Ascending aorta (tissue), 2 donors: ENCODE measurements at regions of chr2 and their contacts with region 1.

Region 1: DNA sequence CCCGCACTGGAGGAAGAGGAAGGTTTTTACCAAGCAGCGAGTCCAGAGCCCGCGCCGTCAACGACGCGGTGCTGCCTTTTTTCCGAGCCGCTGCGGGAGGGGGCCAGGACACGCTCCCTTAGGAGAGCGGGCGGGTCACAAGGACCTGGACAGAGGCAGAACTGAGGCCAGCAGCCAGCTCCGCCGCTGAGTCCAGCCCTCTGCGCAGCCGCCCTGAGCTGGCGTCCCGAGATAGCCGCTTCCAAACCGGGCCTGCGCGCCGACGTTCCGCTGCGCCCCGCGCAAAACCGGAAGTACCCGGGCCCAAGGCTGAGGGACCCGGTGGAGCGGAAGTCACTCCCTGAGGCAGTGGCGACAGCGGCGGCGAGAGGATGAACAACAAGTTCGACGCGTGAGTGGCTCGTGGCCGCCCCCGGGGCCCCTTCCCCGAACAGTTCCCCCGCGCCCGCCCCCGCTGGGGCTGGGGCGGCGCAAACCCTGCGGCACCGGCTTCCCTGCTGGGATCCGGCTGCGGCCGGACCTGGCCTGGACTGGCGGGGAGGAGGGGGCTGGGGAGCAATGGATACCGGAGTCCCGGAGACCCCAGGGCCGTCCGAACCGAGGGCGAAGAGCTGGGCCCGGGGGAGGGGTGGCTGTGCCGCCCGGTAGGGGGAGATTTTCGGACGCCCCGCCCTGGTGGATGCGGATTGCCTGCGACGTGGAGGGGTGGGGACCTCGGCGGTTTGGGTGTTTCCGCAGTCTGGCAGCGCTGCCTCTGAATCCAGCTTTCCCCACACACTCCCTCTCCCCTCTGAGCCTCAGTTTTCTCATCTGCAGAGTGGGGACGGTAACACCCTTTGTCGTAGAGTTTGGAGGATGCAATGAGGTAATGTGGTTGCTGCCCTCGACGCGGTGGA is at the starts of genes EIF4E2 and TIGD1:
- DNase-seq: peak; percentile 67 to 97
- H3K4me3 ChIP-seq: peak within 1 kb of the TSS; percentile 84 to 100
- H3K27ac ChIP-seq: peak within 1 kb of the TSS; percentile 97 to 100
- H3K4me1 ChIP-seq: peaks cover 4 to 5% of the 10 kb centered on the region in 2 donors
- H3K27me3 ChIP-seq: no peaks in the 10 kb centered on the region
- CTCF ChIP-seq: peak; percentile 31 to 45 (median 34)
- total RNA-seq, gene EIF4E2: 16.7 TPM
- total RNA-seq, gene TIGD1: 0.53 TPM

Region 2: GRCh38 chr2:232600053-232600773 is 49.6 kb after region 1 on chr2:
- intact Hi-C with region 1: loop called (anchors 5 kb)
- DNase-seq: no peak
- H3K4me3 ChIP-seq: no peak overlapping the region
- H3K27ac ChIP-seq: no peak overlapping the region
- H3K4me1 ChIP-seq: no peaks in the 10 kb centered on the region
- H3K27me3 ChIP-seq: no peaks in the 10 kb centered on the region
- CTCF ChIP-seq: no peak

Region 3: GRCh38 chr2:232714969-232715368 is 164.4 kb after region 1 on chr2:
- intact Hi-C with region 1: no loop called
- DNase-seq: no peak
- H3K4me3 ChIP-seq: no peak overlapping the region
- H3K27ac ChIP-seq: no peak overlapping the region
- H3K4me1 ChIP-seq: peaks cover 0 to 4% of the 10 kb centered on the region in 2 donors
- H3K27me3 ChIP-seq: no peaks in the 10 kb centered on the region
- CTCF ChIP-seq: no peak